ENCODE measurements at regions of chr18 and their contacts with region 1.

Region 1: GRCh38 chr18:9971313-9971920 is 57.6 kb downstream of the VAPA start:
- DNase-seq: peak; percentile 79
- H3K4me3 ChIP-seq: no peak overlapping the region
- H3K27ac ChIP-seq: no peak overlapping the region
- H3K4me1 ChIP-seq: peaks cover 2% of the 10 kb centered on the region
- CTCF ChIP-seq: peak; percentile 93

Region 2: GRCh38 chr18:10020171-10020570 is 48.8 kb after region 1 on chr18:
- CTCF ChIA-PET with region 1: no interaction called
- POLR2A ChIA-PET with region 1: no interaction called
- intact Hi-C with region 1: loop called (anchors 10 kb)
- DNase-seq: no peak
- H3K4me3 ChIP-seq: no peak overlapping the region
- H3K27ac ChIP-seq: no peak overlapping the region
- H3K4me1 ChIP-seq: peaks cover 12% of the 10 kb centered on the region
- CTCF ChIP-seq: no peak

Region 3: DNA sequence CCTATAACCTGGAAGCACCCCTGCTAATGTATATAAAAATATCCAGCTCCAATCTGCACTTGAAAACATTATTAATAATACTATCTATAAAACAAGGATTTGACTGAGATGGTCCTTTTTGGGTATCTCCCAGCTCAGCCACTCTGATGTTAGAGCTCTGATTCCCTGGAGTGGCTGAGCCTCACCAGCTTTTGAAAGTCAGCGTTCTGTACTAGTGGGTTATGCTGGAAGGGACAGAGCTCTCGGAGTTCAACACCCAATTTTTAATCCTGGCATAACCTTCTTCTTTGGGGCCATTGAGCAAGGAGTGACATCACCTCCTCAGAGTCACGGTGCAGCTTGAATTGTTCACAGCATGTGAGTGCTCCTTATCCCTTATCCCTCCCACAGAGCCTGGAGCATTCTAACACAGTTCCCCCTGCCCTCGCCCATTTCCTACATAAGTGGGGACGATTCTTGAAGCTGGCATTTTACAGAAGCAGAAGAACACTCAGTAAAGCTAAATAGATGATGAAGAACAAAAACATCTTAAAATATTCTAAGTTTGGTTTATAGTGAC is 347.1 kb after region 1 on chr18:
- CTCF ChIA-PET with region 1: no interaction called
- POLR2A ChIA-PET with region 1: no interaction called
- intact Hi-C with region 1: loop called (anchors 10 kb)
- DNase-seq: no peak
- H3K4me3 ChIP-seq: no peak overlapping the region
- H3K27ac ChIP-seq: no peak overlapping the region
- H3K4me1 ChIP-seq: no peaks in the 10 kb centered on the region
- CTCF ChIP-seq: no peak

Region 4: GRCh38 chr18:10519999-10520935 is 548.9 kb after region 1 on chr18:
- CTCF ChIA-PET with region 1: no interaction called
- POLR2A ChIA-PET with region 1: no interaction called
- intact Hi-C with region 1: loop called (anchors 1 kb)
- DNase-seq: peak; percentile 86
- H3K4me3 ChIP-seq: no peak overlapping the region
- H3K27ac ChIP-seq: no peak overlapping the region
- H3K4me1 ChIP-seq: peaks cover 10% of the 10 kb centered on the region
- CTCF ChIP-seq: peak; percentile 95